Body of pancreas (tissue), 4 donors: ENCODE measurements at regions of chr2 and their contacts with region 1.

Region 1: GRCh38 chr2:48107326-48107925 is 201.1 kb upstream of the FBXO11 start:
- DNase-seq: no peak
- ATAC-seq: no peak
- H3K4me3 ChIP-seq: no peak overlapping the region
- H3K27ac ChIP-seq: peak overlapping the region in 2 of 4 donors; percentile 35 to 37
- H3K4me1 ChIP-seq: peaks cover 26% of the 10 kb centered on the region
- H3K27me3 ChIP-seq: no peaks in the 10 kb centered on the region
- CTCF ChIP-seq: no peak
- POLR2A ChIP-seq: no peak

Region 2: GRCh38 chr2:47850198-47850597 is 257.2 kb before region 1 on chr2:
- intact Hi-C with region 1: loop called (anchors 10 kb)
- DNase-seq: no peak
- ATAC-seq: no peak
- H3K4me3 ChIP-seq: no peak overlapping the region
- H3K27ac ChIP-seq: no peak overlapping the region
- H3K4me1 ChIP-seq: peaks cover 9% of the 10 kb centered on the region
- H3K27me3 ChIP-seq: no peaks in the 10 kb centered on the region
- CTCF ChIP-seq: no peak
- POLR2A ChIP-seq: no peak

Region 3: GRCh38 chr2:48530033-48530804 is 422.8 kb after region 1 on chr2 and contains the start of gene STON1:
- intact Hi-C with region 1: no loop called
- DNase-seq: peak; percentile 17 to 45 (median 34)
- ATAC-seq: peak; percentile 51
- H3K4me3 ChIP-seq: peak within 1 kb of the TSS; percentile 35 to 55
- H3K27ac ChIP-seq: peak within 1 kb of the TSS in 3 of 4 donors; percentile 21 to 51 (median 39)
- H3K4me1 ChIP-seq: peaks cover 12% of the 10 kb centered on the region
- H3K27me3 ChIP-seq: no peaks in the 10 kb centered on the region
- CTCF ChIP-seq: no peak
- POLR2A ChIP-seq: no peak
- total RNA-seq, gene STON1: 9.1 to 24.1 TPM